Activated T-helper 2 cell treated with anti-CD3 and anti-CD28 coated beads, Interferon-gamma antibody, Interleukin-2, Interleukin-4, amounts not matched to agents 10 μg/mL and 5 μg/mL and 100 μg/mL, durations not matched to agents 14 hours and 24 hours and 36 hours (primary cell): ENCODE measurements at regions of chr9 and their contacts with region 1.

Region 1: GRCh38 chr9:111926421-111926875 is 29.8 kb downstream of the UGCG start:
- DNase-seq: peak; percentile 25
- H3K4me3 Mint-ChIP-seq: no peak overlapping the region
- H3K27ac Mint-ChIP-seq: peak overlapping the region; percentile 12
- H3K4me1 Mint-ChIP-seq: peaks cover 18% of the 10 kb centered on the region
- H3K27me3 Mint-ChIP-seq: no peaks in the 10 kb centered on the region

Region 2: GRCh38 chr9:111597817-111598729 is 328.4 kb before region 1 on chr9:
- intact Hi-C with region 1: no loop called
- DNase-seq: peak; percentile 26
- H3K4me3 Mint-ChIP-seq: peak overlapping the region; percentile 86
- H3K27ac Mint-ChIP-seq: no peak overlapping the region
- H3K4me1 Mint-ChIP-seq: peaks cover 18% of the 10 kb centered on the region
- H3K27me3 Mint-ChIP-seq: peaks cover 36% of the 10 kb centered on the region

Region 3: GRCh38 chr9:111937781-111938426 is 11.5 kb after region 1 on chr9:
- intact Hi-C with region 1: loop called (anchors 2 kb)
- DNase-seq: peak; percentile 16
- H3K4me3 Mint-ChIP-seq: peak overlapping the region; percentile 41
- H3K27ac Mint-ChIP-seq: peak overlapping the region; percentile 85
- H3K4me1 Mint-ChIP-seq: peaks cover 23% of the 10 kb centered on the region
- H3K27me3 Mint-ChIP-seq: no peaks in the 10 kb centered on the region

Region 4: GRCh38 chr9:111983484-111983908 is 57.0 kb after region 1 on chr9:
- intact Hi-C with region 1: no loop called
- DNase-seq: no peak
- H3K4me3 Mint-ChIP-seq: no peak overlapping the region
- H3K27ac Mint-ChIP-seq: no peak overlapping the region
- H3K4me1 Mint-ChIP-seq: peaks cover 15% of the 10 kb centered on the region
- H3K27me3 Mint-ChIP-seq: peaks cover 21% of the 10 kb centered on the region